ENCODE measurements at regions of chr6 and their contacts with region 1.

Region 1: GRCh38 chr6:160455541-160456213 is 107.5 kb downstream of the SLC22A3 start:
- DNase-seq: peak; percentile 64 to 89 (median 79)
- H3K4me3 ChIP-seq: no peak overlapping the region
- H3K27ac ChIP-seq: peak overlapping the region; percentile 58 to 65
- H3K4me1 ChIP-seq: peaks cover 2% of the 10 kb centered on the region
- H3K27me3 ChIP-seq: no peaks in the 10 kb centered on the region
- CTCF ChIP-seq: peak; percentile 91 to 99 (median 98)
- EP300 ChIP-seq: no peak
- POLR2A ChIP-seq: peak; percentile 30

Region 2: DNA sequence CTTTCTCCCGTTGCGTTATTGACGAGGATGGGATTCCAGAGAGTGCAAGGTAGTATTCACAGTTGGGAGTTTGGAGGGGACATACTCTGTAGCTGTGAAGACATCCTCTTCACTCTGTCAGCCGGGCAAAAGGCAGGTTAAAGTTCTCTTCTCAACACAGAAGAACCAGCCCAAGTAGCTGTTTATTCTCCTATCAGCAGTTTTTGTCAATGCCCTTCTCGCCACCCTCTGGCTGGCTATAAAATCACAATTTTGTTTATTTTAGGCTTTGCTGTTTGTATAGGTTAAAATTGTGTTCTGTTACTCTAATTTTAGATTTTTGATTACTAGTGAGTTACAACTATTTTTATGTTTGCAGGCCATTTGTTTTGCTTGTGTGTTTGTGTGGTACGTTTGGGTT is 602.8 kb before region 1 on chr6:
- intact Hi-C with region 1: loop called in 1 of 4 experiments (anchors 10 kb)
- DNase-seq: no peak
- H3K4me3 ChIP-seq: no peak overlapping the region
- H3K27ac ChIP-seq: no peak overlapping the region
- H3K4me1 ChIP-seq: peaks cover 3% of the 10 kb centered on the region
- H3K27me3 ChIP-seq: no peaks in the 10 kb centered on the region
- CTCF ChIP-seq: peak in 1 of 3 donors; percentile 41
- EP300 ChIP-seq: no peak
- POLR2A ChIP-seq: no peak

Region 3: GRCh38 chr6:159862103-159862502 is 593.6 kb before region 1 on chr6:
- intact Hi-C with region 1: loop called (anchors 5 to 10 kb)
- DNase-seq: no peak
- H3K4me3 ChIP-seq: no peak overlapping the region
- H3K27ac ChIP-seq: no peak overlapping the region
- H3K4me1 ChIP-seq: no peaks in the 10 kb centered on the region
- H3K27me3 ChIP-seq: no peaks in the 10 kb centered on the region
- CTCF ChIP-seq: no peak
- EP300 ChIP-seq: no peak
- POLR2A ChIP-seq: no peak

Region 4: DNA sequence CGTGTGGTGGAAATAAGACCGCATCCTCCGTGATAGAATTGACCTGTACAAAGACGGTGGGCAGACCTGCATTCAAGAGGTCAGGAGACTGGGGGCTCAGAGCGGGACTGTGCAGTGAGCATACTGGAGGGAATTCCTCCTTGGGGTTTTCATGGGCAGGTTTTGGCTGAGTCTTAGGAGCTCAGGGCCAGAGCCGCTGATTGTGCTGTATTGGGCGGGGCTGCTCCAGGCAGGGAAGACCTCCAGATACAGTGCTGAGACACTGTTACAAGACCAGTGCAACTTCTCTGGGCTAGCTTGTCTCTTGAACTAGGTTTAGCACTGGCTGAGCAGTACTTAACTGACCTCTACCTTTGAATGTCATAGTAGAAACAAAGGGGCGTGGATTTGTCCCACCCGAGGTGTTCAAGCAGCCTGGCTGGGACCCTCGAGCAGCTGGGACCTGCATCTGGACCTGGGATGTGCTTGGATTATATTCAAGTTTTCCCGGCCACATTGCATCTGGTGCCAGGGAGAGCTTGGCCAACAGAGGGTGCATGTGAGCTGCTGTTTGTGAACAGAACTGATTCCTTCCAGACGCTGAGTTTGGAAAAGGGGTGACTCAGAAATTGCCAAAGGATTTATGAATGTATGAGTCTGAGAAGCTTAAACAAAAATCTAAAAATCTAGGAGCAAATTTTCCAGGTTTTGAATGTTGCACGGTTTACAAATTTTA is 367.5 kb before region 1 on chr6:
- intact Hi-C with region 1: loop called in 3 of 4 experiments (anchors 2 to 10 kb)
- DNase-seq: peak; percentile 76 to 85 (median 82)
- H3K4me3 ChIP-seq: no peak overlapping the region
- H3K27ac ChIP-seq: no peak overlapping the region
- H3K4me1 ChIP-seq: no peaks in the 10 kb centered on the region
- H3K27me3 ChIP-seq: no peaks in the 10 kb centered on the region
- CTCF ChIP-seq: peak; percentile 48 to 80 (median 68)
- EP300 ChIP-seq: no peak
- POLR2A ChIP-seq: no peak

Region 5: GRCh38 chr6:160137989-160138835 is 317.5 kb before region 1 on chr6:
- intact Hi-C with region 1: loop called in 3 of 4 experiments (anchors 5 to 10 kb)
- DNase-seq: peak; percentile 41 to 69 (median 68)
- H3K4me3 ChIP-seq: no peak overlapping the region
- H3K27ac ChIP-seq: no peak overlapping the region
- H3K4me1 ChIP-seq: peaks cover 6% of the 10 kb centered on the region
- H3K27me3 ChIP-seq: no peaks in the 10 kb centered on the region
- CTCF ChIP-seq: peak; percentile 54 to 83 (median 68)
- EP300 ChIP-seq: no peak
- POLR2A ChIP-seq: no peak

Region 6: DNA sequence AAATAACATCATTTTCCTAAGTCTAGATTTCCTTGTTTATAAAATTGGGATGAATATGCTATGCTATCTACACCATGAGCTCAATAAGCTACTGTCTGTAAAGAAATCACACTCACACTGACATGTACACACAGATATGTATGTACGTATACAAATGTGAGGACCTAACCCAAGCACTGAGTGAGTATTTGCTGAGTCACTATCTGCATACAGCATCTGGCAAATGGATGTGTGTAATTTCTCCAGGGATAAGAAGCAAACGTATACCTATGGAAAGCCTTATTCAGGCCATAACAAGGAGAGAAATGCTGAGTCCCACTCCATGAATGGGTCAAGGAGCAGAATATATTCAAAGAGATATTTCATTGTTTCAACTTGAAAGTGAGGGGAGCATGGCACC is 54.5 kb after region 1 on chr6:
- intact Hi-C with region 1: no loop called
- DNase-seq: no peak
- H3K4me3 ChIP-seq: no peak overlapping the region
- H3K27ac ChIP-seq: no peak overlapping the region
- H3K4me1 ChIP-seq: no peaks in the 10 kb centered on the region
- H3K27me3 ChIP-seq: no peaks in the 10 kb centered on the region
- CTCF ChIP-seq: no peak
- EP300 ChIP-seq: no peak
- POLR2A ChIP-seq: no peak

Region 7: DNA sequence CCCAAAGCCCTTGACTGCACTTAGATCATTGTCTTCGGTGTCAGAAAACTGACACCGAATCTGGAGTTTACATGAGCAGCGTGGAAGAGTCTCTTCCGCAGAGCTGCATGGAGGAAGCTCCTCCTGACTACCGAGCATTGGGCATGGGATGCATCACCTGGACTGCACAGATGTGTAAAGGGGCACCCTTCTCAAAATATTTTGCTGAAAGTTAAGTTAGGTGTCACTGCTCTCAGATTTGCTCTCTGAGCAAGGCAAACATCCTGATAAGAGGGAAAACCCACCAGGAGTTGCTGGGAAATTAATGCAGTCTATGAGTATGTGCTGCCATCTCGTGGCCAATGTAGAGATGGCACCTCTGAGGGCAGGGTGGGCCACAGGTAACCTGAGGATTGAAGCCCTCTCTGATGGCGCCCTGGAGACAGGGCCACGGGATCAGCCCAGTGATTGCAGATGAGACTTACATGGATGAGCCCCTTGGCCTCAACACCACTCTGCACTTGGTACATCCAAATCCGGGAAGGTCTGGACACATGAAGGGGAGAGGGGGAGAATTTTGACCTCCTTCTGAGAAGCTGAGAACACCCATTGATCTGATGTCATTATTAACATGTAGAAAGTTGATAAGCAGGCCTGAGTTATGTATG is 78.5 kb after region 1 on chr6:
- intact Hi-C with region 1: loop called in 2 of 4 experiments (anchors 2 kb)
- DNase-seq: peak; percentile 28 to 73 (median 68)
- H3K4me3 ChIP-seq: no peak overlapping the region
- H3K27ac ChIP-seq: no peak overlapping the region
- H3K4me1 ChIP-seq: peaks cover 2% of the 10 kb centered on the region
- H3K27me3 ChIP-seq: no peaks in the 10 kb centered on the region
- CTCF ChIP-seq: peak; percentile 81 to 86 (median 85)
- EP300 ChIP-seq: no peak
- POLR2A ChIP-seq: no peak

Region 8: DNA sequence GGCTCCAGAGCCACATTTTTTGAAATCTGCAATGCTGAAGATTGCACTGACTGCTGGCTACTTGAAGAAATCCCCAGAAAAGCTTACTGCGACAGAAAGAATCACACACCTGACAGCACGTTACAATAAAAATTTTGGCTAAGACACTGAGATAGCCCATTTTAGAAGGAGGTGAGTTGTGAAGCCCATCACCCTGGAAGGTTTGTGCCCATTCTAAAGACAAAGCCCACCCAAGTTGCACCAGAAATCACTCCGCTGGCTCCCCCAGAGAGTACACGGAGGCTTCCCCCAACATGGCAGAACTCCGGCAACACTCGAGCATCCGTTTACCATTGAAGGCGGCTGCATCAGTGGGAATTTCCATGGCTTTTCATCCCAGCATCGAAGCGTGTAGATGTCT is 179.0 kb after region 1 on chr6:
- intact Hi-C with region 1: no loop called
- DNase-seq: peak in 1 of 5 donors; percentile 20
- H3K4me3 ChIP-seq: no peak overlapping the region
- H3K27ac ChIP-seq: no peak overlapping the region
- H3K4me1 ChIP-seq: no peaks in the 10 kb centered on the region
- H3K27me3 ChIP-seq: no peaks in the 10 kb centered on the region
- CTCF ChIP-seq: no peak
- EP300 ChIP-seq: no peak
- POLR2A ChIP-seq: no peak